ENCODE measurements at regions of chr13 and their contacts with region 1.

Region 1: GRCh38 chr13:80305737-80306136 is 35.2 kb downstream of the SPRY2 start:
- DNase-seq: no peak
- ATAC-seq: peak; percentile 51
- H3K4me3 ChIP-seq: no peak overlapping the region
- H3K27ac ChIP-seq: no peak overlapping the region
- H3K4me1 ChIP-seq: no peaks in the 10 kb centered on the region
- H3K27me3 ChIP-seq: no peaks in the 10 kb centered on the region
- CTCF ChIP-seq: no peak
- EP300 ChIP-seq: no peak
- POLR2A ChIP-seq: no peak
- RAD21 ChIP-seq: no peak

Region 2: DNA sequence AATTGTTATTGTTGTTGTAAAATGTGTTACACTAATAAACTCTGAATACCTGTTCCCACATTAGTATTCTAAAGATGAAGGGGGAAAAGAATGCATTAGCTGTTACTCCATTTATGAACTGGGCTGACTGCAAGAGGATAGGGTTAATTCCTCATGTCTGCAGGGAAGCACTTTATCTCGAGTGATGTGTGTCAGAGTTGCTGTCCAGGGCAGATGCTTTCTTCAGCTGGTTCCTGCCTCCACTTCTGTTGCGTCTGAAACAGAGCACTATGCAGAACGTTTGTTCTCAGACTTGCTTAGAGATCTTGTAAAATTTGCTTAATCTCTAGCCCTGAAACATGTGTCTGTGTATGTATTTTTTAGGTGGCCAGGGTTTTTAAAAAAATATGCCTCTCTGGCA is 283.6 kb before region 1 on chr13:
- CTCF ChIA-PET with region 1: no interaction called
- POLR2A ChIA-PET with region 1: no interaction called
- RAD21 ChIA-PET with region 1: no interaction called
- SMC1A ChIA-PET with region 1: no interaction called
- in situ Hi-C with region 1: no loop called
- intact Hi-C with region 1: no loop called
- DNase-seq: no peak
- ATAC-seq: no peak
- H3K4me3 ChIP-seq: no peak overlapping the region
- H3K27ac ChIP-seq: no peak overlapping the region
- H3K4me1 ChIP-seq: no peaks in the 10 kb centered on the region
- H3K27me3 ChIP-seq: no peaks in the 10 kb centered on the region
- CTCF ChIP-seq: no peak
- EP300 ChIP-seq: no peak
- POLR2A ChIP-seq: no peak
- RAD21 ChIP-seq: no peak

Region 3: DNA sequence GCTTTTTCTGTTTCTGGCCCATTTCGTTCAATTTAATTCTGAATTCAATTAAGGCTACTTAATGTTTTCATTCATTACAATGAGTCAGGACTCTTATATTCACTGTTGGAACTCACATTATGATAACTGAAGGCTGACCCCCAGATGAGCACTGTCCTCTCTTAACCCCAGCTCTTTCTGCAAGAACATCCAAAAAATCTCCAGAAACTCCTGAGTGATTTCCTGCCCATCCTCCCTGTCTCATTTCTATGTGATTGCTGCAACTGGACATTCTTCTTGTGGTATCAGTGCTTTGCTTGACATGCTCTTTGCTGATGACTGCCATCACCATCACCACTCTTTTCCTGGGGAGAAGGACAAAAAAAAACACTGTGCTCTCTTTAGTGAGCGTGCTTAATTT is 205.1 kb before region 1 on chr13:
- CTCF ChIA-PET with region 1: no interaction called
- POLR2A ChIA-PET with region 1: no interaction called
- RAD21 ChIA-PET with region 1: no interaction called
- SMC1A ChIA-PET with region 1: no interaction called
- in situ Hi-C with region 1: no loop called
- intact Hi-C with region 1: no loop called
- DNase-seq: no peak
- ATAC-seq: no peak
- H3K4me3 ChIP-seq: no peak overlapping the region
- H3K27ac ChIP-seq: no peak overlapping the region
- H3K4me1 ChIP-seq: no peaks in the 10 kb centered on the region
- H3K27me3 ChIP-seq: no peaks in the 10 kb centered on the region
- CTCF ChIP-seq: no peak
- EP300 ChIP-seq: no peak
- POLR2A ChIP-seq: no peak
- RAD21 ChIP-seq: no peak

Region 4: GRCh38 chr13:80259159-80259558 is 46.6 kb before region 1 on chr13:
- CTCF ChIA-PET with region 1: no interaction called
- POLR2A ChIA-PET with region 1: no interaction called
- RAD21 ChIA-PET with region 1: interaction called, 5 read pairs
- SMC1A ChIA-PET with region 1: interaction called, 5 read pairs
- in situ Hi-C with region 1: no loop called
- intact Hi-C with region 1: loop called (anchors 5 kb)
- DNase-seq: no peak
- ATAC-seq: peak; percentile 55
- H3K4me3 ChIP-seq: no peak overlapping the region
- H3K27ac ChIP-seq: no peak overlapping the region
- H3K4me1 ChIP-seq: peaks cover 9% of the 10 kb centered on the region; the same call in 1 of the 2 replicates
- H3K27me3 ChIP-seq: no peaks in the 10 kb centered on the region
- CTCF ChIP-seq: no peak
- EP300 ChIP-seq: no peak
- POLR2A ChIP-seq: no peak
- RAD21 ChIP-seq: no peak

Region 5: GRCh38 chr13:80276371-80277289 is 29.1 kb before region 1 on chr13:
- CTCF ChIA-PET with region 1: no interaction called
- POLR2A ChIA-PET with region 1: interaction called, 3 read pairs
- RAD21 ChIA-PET with region 1: no interaction called
- SMC1A ChIA-PET with region 1: interaction called, 12 read pairs
- in situ Hi-C with region 1: no loop called
- intact Hi-C with region 1: no loop called
- DNase-seq: no peak
- ATAC-seq: peak; percentile 91
- H3K4me3 ChIP-seq: no peak overlapping the region
- H3K27ac ChIP-seq: no peak overlapping the region
- H3K4me1 ChIP-seq: peaks cover 4% of the 10 kb centered on the region
- H3K27me3 ChIP-seq: no peaks in the 10 kb centered on the region
- CTCF ChIP-seq: no peak
- EP300 ChIP-seq: peak in 1 of 2 experiments; percentile 29; a peak in 2 of 4 replicates
- POLR2A ChIP-seq: no peak
- RAD21 ChIP-seq: no peak

Measured in GM12878 (cell line).